PC-9 (cell line): ENCODE measurements at regions of chr3 and their contacts with region 1.

Region 1: DNA sequence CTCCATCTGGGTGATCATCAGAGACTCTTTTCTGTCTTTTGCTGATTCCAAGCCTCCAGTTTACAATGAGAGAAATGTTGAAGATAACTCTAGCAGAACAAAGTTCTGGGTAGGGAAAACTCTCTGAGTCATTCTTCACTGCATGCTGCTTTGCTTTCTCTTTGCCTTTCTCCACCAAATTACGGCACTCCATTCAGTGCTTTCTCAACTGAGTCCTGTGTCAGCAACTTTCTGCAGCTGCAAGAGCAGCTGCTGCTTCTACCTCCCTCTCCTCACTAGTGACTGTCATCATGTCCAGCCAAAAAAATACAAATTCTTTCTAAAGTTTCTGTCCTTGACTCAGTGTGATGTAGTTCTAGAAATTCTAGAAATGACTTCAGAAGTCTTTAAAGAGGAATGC is 953.8 kb downstream of the IGSF11 start:
- DNase-seq: no peak
- H3K4me3 ChIP-seq: no peak overlapping the region
- H3K27ac ChIP-seq: no peak overlapping the region
- H3K4me1 ChIP-seq: no peaks in the 10 kb centered on the region
- H3K27me3 ChIP-seq: no peaks in the 10 kb centered on the region
- CTCF ChIP-seq: no peak

Region 2: DNA sequence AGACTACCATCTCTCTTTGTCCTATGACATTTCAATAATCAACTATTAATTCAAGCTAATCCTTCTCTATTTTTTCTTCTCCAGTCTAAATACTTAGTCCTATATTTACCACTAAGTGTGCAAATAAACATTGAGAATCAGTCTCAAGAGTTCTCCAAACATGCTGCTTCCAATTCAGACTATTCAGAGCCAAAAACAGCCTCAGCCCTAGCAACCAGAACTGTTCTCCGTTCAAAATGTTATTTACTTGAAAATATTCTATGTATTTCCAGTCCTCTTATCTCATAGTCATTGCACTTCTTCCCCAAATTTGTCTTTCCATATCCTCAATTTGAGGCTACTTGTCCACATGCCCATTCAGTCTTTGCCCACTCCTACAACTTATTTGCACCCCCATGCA is 148.3 kb after region 1 on chr3:
- CTCF ChIA-PET with region 1: no interaction called
- POLR2A ChIA-PET with region 1: interaction called, 16 read pairs
- intact Hi-C with region 1: no loop called
- DNase-seq: no peak
- H3K4me3 ChIP-seq: no peak overlapping the region
- H3K27ac ChIP-seq: no peak overlapping the region
- H3K4me1 ChIP-seq: no peaks in the 10 kb centered on the region
- H3K27me3 ChIP-seq: no peaks in the 10 kb centered on the region
- CTCF ChIP-seq: no peak

Region 3: DNA sequence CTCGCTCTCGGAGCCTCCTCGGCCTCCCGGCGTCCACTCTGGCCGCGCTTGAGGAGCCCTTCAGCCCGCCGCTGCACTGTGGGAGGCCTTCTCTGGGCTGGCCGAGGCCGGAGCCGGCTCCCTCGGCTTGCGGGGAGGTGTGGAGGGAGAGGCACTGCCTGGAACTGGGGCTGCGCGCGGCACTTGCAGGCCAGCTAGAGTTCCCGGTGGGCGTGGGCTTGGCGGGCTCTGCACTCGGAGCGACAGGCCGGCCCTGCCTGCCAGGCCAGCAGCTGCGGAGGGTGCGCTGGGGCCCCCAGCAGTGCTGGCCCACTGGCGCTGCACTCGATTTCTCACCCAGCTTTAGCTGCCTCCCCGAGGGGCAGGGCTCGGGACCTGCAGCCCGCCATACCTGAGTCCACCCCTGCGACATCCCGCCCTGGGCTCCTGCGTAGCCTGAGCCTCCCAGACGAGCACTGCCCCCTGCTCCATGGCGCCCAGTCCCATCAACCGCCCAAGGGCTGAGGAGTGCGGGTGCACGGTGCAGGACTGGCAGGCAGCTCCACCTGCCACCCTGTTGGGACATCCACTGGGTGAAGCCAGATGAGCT is 188.7 kb after region 1 on chr3:
- CTCF ChIA-PET with region 1: no interaction called
- POLR2A ChIA-PET with region 1: no interaction called
- intact Hi-C with region 1: no loop called
- DNase-seq: no peak
- H3K4me3 ChIP-seq: no peak overlapping the region
- H3K27ac ChIP-seq: no peak overlapping the region
- H3K4me1 ChIP-seq: no peaks in the 10 kb centered on the region
- H3K27me3 ChIP-seq: no peaks in the 10 kb centered on the region
- CTCF ChIP-seq: no peak